SK-N-SH (cell line): ENCODE measurements at regions of chr12 and their contacts with region 1.

Region 1: DNA sequence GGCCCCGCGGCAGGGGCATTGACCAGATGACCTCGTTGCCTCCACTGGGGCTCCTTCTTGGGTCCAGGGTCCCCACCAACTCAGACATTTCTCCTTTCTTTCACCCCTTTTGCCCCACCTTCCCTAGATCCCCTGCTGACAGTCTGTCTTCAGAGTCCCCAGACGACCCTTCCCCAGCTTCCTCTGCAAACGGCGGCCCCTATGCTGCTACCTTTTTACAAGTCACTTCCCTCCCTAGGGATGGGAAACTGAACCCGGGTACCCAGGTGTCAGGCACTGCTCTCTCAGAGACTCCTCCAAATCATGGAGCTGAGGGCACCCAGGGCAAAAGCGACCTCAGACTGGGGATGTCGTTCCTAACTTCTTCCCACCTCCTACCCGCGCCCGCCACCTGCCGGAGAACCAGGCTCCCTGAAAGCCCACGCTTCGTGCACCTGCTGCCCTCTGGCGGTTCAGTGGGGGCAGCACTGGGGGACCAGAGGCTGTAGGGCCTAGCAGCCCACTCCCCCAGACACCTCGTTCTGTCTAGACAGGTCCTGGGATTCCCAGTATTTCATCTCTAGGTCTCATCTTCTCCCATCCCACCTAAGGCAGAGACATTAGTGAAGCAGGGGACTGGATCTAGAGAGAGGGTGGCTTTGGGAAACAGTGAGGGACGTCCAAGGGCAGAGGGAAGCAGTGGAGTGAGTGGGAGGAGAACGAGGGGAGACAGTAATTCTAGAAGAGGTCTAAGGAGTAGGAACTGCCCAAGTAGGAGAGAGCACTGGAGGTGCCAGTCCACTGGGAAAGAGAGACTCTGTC is 4.9 kb downstream of the ZNF385A start:
- DNase-seq: peak; percentile 96
- H3K4me3 ChIP-seq: peak overlapping the region; percentile 54 to 63
- H3K27ac ChIP-seq: peak overlapping the region in 1 of 2 experiments; percentile 60; a peak in 3 of 4 replicates
- H3K4me1 ChIP-seq: peaks cover 0 to 30% of the 10 kb centered on the region in 2 experiments; a peak in 1 of 4 replicates
- H3K27me3 ChIP-seq: no peaks in the 10 kb centered on the region
- CTCF ChIP-seq: peak; percentile 100
- EP300 ChIP-seq: no peak
- RAD21 ChIP-seq: peak; percentile 89

Region 2: GRCh38 chr12:54207484-54208294 is 171.9 kb before region 1 on chr12:
- CTCF ChIA-PET with region 1: interaction called, 38 read pairs
- POLR2A ChIA-PET with region 1: no interaction called
- DNase-seq: peak; percentile 81
- H3K4me3 ChIP-seq: no peak overlapping the region
- H3K27ac ChIP-seq: no peak overlapping the region; a peak in 1 of 4 replicates
- H3K4me1 ChIP-seq: peaks cover 0 to 15% of the 10 kb centered on the region in 2 experiments; a peak in 1 of 4 replicates
- H3K27me3 ChIP-seq: peaks cover 16% of the 10 kb centered on the region; the same call in 1 of the 2 replicates
- CTCF ChIP-seq: peak; percentile 90
- EP300 ChIP-seq: no peak
- RAD21 ChIP-seq: peak; percentile 86

Region 3: GRCh38 chr12:54251667-54252284 is 127.8 kb before region 1 on chr12:
- CTCF ChIA-PET with region 1: interaction called, 11 read pairs
- POLR2A ChIA-PET with region 1: no interaction called
- DNase-seq: peak; percentile 73
- H3K4me3 ChIP-seq: no peak overlapping the region
- H3K27ac ChIP-seq: peak overlapping the region in 1 of 2 experiments; percentile 43; a peak in 2 of 4 replicates
- H3K4me1 ChIP-seq: peaks cover 0 to 4% of the 10 kb centered on the region in 2 experiments; a peak in 2 of 4 replicates
- H3K27me3 ChIP-seq: no peaks in the 10 kb centered on the region
- CTCF ChIP-seq: peak; percentile 87
- EP300 ChIP-seq: no peak
- RAD21 ChIP-seq: peak; percentile 78

Region 4: DNA sequence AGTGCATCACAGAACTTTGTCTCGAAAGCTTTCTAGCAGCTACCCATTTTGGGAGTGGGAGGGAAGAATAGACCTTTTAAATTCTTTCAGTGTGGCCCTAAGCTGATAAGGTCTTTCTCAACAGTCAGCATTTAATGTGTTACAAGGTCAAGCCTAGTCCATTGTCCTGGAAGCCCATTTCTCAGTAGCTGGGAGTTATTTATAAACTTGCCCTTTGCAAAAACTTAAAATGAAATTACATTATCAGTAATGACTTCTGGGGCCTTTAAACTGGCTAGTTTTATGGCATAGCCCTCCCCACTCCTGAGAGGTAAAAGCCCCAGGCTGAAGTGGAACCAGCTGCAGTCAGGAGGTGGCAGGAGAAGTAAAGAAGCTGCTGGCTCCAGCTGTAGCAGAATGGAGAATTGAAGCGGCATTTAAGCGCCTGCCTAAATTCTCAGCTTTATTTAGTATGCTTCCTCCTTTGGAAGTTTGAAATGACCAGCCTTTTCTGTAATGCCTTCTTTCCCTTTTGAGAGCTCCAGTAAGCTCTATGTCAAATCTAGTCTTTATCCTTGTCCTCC is 42.2 kb before region 1 on chr12:
- CTCF ChIA-PET with region 1: interaction called, 40 read pairs
- POLR2A ChIA-PET with region 1: interaction called, 3 read pairs
- DNase-seq: no peak
- H3K4me3 ChIP-seq: no peak overlapping the region
- H3K27ac ChIP-seq: no peak overlapping the region; a peak in 1 of 4 replicates
- H3K4me1 ChIP-seq: peaks cover 0 to 5% of the 10 kb centered on the region in 2 experiments; a peak in 1 of 4 replicates
- H3K27me3 ChIP-seq: no peaks in the 10 kb centered on the region
- CTCF ChIP-seq: no peak
- EP300 ChIP-seq: peak in 1 of 2 experiments; percentile 22; a peak in 1 of 4 replicates
- RAD21 ChIP-seq: peak; percentile 65

Region 5: DNA sequence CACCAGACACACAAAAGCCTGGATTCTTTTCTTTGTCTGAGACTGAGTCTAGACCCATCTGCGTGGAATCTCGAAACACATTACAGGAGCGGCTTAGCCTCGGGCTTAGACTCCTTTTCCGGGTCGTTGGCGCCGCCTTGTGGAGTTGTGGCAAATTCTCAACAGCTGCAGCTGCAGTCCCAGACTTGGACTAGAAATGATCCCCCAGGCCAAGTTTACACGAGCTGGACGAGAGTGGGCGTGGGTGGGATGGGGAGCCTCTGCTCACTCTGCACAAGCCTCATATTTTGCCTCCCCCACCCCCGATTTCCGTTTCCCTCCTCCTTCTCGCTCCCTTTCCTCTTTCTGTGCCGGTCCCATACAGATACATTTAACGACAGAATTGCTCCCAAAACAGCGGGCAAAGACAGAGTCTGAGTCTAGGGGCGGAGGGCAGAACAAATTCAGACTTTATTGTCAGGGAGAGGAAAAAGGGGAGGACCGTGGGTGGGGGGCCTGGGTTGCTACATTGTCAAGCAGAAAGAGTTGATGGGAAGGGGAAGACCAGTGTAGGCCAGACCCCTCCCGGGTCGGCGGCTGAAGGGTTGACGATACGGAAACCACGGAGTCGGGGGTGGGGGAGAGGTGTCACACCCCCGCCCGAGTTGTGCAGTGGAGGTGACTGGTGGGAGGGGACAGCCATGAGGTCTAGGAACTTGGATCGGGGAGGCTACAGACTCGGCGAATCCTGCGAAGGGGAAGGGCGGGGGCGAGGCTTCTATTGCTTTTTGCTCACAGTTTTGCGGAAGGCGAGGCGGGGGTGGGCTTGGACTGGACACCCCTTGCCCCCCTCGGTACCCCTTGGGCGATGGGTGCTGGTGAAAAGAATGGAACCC is 10.7 kb before region 1 on chr12:
- CTCF ChIA-PET with region 1: interaction called, 118 read pairs
- POLR2A ChIA-PET with region 1: interaction called, 3 read pairs
- DNase-seq: peak; percentile 77
- H3K4me3 ChIP-seq: no peak overlapping the region
- H3K27ac ChIP-seq: no peak overlapping the region
- H3K4me1 ChIP-seq: peaks cover 11 to 26% of the 10 kb centered on the region in 2 experiments; a peak in 2 of 4 replicates
- H3K27me3 ChIP-seq: no peaks in the 10 kb centered on the region
- CTCF ChIP-seq: peak; percentile 84
- EP300 ChIP-seq: no peak
- RAD21 ChIP-seq: peak; percentile 90

Region 6: GRCh38 chr12:54404061-54405004 is 24.7 kb after region 1 on chr12:
- CTCF ChIA-PET with region 1: interaction called, 53 read pairs
- POLR2A ChIA-PET with region 1: no interaction called
- DNase-seq: peak; percentile 64
- H3K4me3 ChIP-seq: peak overlapping the region in 1 of 2 experiments; percentile 18; a peak in 1 of 4 replicates
- H3K27ac ChIP-seq: no peak overlapping the region
- H3K4me1 ChIP-seq: no peaks in the 10 kb centered on the region
- H3K27me3 ChIP-seq: no peaks in the 10 kb centered on the region
- CTCF ChIP-seq: peak; percentile 98
- EP300 ChIP-seq: no peak
- RAD21 ChIP-seq: peak; percentile 23